IMR-90 (cell line): ENCODE measurements at regions of chr6 and their contacts with region 1.

Region 1: GRCh38 chr6:8131256-8131897 is 29.0 kb upstream of the EEF1E1 start:
- DNase-seq: peak; percentile 70
- ATAC-seq: peak; percentile 96
- H3K4me3 ChIP-seq: no peak overlapping the region
- H3K27ac ChIP-seq: no peak overlapping the region
- H3K4me1 ChIP-seq: no peaks in the 10 kb centered on the region
- H3K27me3 ChIP-seq: no peaks in the 10 kb centered on the region
- CTCF ChIP-seq: peak; percentile 87
- POLR2A ChIP-seq: 0 out of 2 replicates have a peak, but pooled peaks have one; percentile 55
- RAD21 ChIP-seq: peak; percentile 96

Region 2: DNA sequence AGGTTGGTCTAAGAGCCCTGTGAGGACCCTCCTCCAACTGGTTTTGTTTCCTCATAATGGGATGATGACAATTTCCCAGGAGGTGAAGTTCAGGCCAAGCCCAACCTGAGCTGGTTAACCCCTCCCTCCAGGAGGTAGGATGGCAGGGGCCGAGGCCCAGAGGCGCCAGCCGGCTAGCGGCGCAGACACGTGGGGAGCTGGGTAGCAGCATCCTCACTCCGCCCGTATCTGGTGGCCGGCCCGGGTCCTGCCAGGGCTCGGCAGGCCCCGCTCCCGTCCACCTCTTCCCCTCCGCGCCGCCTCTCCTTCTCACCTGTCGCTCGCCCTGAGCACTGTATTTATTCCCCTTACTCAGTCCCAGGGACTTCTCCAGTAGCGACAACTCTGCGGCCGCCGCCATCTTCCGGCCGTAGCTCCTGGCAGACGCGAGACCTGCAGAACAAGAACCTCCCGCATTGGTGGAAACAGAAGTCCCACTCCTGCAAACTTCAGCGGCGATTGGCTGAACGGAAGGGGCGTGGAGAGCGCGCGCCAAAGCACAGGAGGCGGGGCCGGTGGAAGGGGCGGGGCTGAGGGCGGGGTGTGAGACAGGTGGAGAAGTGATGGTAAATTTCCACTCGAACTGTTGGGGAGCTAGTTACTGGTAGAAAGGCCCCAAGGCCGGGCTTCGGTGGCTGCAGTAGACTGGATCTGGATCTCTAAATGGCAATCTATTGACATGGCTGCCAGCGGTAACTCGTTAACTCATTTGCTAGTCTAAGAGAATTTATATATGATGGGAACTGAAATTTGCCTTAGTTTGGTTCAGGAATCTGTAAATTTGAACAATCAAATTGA is 29.0 kb before region 1 on chr6 and contains the start of gene EEF1E1:
- CTCF ChIA-PET with region 1: no interaction called
- POLR2A ChIA-PET with region 1: no interaction called
- dilution Hi-C with region 1: no loop called
- in situ Hi-C with region 1: no loop called
- intact Hi-C with region 1: no loop called
- DNase-seq: peak; percentile 94
- ATAC-seq: peak; percentile 99
- H3K4me3 ChIP-seq: peak within 1 kb of the TSS; percentile 92
- H3K27ac ChIP-seq: peak within 1 kb of the TSS; percentile 60
- H3K4me1 ChIP-seq: no peaks in the 10 kb centered on the region; the same call in 1 of the 2 replicates
- H3K27me3 ChIP-seq: no peaks in the 10 kb centered on the region
- CTCF ChIP-seq: no peak
- POLR2A ChIP-seq: peak; percentile 81
- RAD21 ChIP-seq: no peak
- total RNA-seq, gene EEF1E1: 60.0 and 65.8 TPM in 2 replicates

Region 3: DNA sequence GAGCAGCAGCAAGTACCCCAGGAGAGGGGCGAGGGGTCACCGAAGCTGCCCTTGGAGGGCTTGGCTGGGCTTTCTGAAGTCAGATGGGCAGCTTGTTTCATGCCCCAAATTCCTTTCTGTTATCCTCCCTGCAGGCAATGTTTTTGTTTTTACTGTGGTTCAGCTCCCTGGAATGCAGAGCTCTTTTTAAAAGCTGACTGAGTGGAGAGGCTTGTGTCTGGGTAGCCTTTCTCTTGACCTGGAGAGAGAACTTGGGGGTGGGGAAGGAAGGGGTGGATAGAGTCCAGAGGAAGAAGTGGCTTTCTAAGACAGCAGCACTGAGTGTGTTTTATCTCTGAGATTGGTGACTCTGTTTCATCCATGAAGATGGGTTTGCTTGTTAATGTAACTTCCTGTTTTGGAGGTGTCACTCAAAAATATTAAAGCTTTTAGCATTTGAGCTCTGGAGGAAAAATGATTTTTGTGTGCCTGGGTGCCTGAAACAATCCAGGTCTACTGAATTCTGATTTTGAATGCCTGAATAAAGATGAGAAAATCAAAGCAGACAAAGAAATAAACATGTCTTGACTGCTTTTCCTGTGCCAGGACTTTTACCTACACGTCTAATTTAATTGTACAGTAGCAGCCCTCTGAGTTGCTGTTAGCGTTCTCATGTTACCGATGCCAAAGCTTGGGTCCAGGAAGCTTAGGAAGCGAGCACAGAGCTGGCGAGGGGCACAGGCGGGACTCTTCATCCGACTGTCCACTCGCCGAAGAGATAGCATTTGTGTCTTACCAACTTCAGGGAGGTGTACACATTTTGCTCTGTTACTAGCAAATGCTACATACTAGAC is 49.2 kb after region 1 on chr6:
- CTCF ChIA-PET with region 1: interaction called, 12 read pairs
- POLR2A ChIA-PET with region 1: no interaction called
- dilution Hi-C with region 1: no loop called
- in situ Hi-C with region 1: no loop called
- intact Hi-C with region 1: loop called (anchors 5 kb)
- DNase-seq: peak; percentile 81
- ATAC-seq: peak; percentile 93
- H3K4me3 ChIP-seq: no peak overlapping the region
- H3K27ac ChIP-seq: peak overlapping the region; percentile 82; the same call in 1 of the 2 replicates
- H3K4me1 ChIP-seq: peaks cover 19% of the 10 kb centered on the region
- H3K27me3 ChIP-seq: no peaks in the 10 kb centered on the region
- CTCF ChIP-seq: no peak
- POLR2A ChIP-seq: no peak
- RAD21 ChIP-seq: peak; percentile 19; the same call in 1 of the 2 replicates

Region 4: GRCh38 chr6:8219352-8219943 is 88.1 kb after region 1 on chr6:
- CTCF ChIA-PET with region 1: interaction called, 145 read pairs
- POLR2A ChIA-PET with region 1: interaction called, 5 read pairs
- dilution Hi-C with region 1: no loop called
- in situ Hi-C with region 1: loop called (anchors 5 kb)
- intact Hi-C with region 1: loop called (anchors 1 kb)
- DNase-seq: peak; percentile 63
- ATAC-seq: peak; percentile 79
- H3K4me3 ChIP-seq: no peak overlapping the region
- H3K27ac ChIP-seq: no peak overlapping the region
- H3K4me1 ChIP-seq: no peaks in the 10 kb centered on the region
- H3K27me3 ChIP-seq: peaks cover 2% of the 10 kb centered on the region; the same call in 1 of the 2 replicates
- CTCF ChIP-seq: peak; percentile 82
- POLR2A ChIP-seq: no peak
- RAD21 ChIP-seq: peak; percentile 89

Region 5: GRCh38 chr6:8415280-8415679 is 283.9 kb after region 1 on chr6:
- CTCF ChIA-PET with region 1: no interaction called
- POLR2A ChIA-PET with region 1: no interaction called
- dilution Hi-C with region 1: no loop called
- in situ Hi-C with region 1: no loop called
- intact Hi-C with region 1: loop called (anchors 5 kb)
- DNase-seq: peak; percentile 8
- ATAC-seq: peak; percentile 27; the same call in 1 of the 2 replicates
- H3K4me3 ChIP-seq: no peak overlapping the region
- H3K27ac ChIP-seq: no peak overlapping the region
- H3K4me1 ChIP-seq: no peaks in the 10 kb centered on the region
- H3K27me3 ChIP-seq: no peaks in the 10 kb centered on the region
- CTCF ChIP-seq: no peak
- POLR2A ChIP-seq: no peak
- RAD21 ChIP-seq: no peak